ENCODE measurements at regions of chr19 and their contacts with region 1.

Region 1: DNA sequence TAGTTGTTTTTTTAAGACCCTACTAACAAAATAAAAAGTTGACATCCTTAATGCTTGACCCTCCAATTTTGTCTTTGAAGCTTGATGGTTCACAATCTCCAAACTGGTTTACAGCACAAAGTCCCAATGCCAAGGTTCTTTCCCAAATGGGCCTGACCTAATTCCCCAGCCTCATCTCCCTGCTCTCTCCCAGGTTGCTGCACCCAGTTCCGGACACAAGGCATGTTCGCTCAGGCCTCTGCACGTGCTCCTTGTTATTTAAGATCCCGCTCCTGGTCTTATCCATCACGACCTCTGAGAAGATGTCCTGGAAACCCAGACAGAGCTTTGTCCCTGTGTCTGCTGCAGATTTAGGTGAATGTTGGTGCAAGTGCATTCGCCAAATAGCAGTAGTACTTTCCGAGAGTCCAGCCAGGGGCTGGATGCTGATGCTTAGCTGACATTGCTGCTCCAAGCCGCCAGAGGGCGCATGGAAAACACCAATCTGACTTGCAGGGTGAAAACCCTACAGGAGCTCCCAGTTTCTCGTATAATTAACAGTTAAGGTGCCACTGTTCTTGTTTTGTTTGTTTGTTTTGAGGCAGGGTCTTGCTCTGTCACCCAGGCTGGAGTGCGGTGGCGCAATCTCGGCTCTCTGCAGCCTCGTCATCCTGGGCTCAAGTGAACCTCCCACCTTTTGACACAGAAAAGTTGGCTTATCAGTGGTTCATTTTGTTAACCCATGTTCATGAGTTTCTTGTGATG is 18.5 kb downstream of the LYPD3 start:
- DNase-seq: peak; percentile 85
- ATAC-seq: peak; percentile 88
- H3K4me3 Mint-ChIP-seq: no peak overlapping the region
- H3K27ac Mint-ChIP-seq: peak overlapping the region; percentile 18
- H3K4me1 Mint-ChIP-seq: peaks cover 25% of the 10 kb centered on the region
- H3K27me3 Mint-ChIP-seq: no peaks in the 10 kb centered on the region

Region 2: GRCh38 chr19:43337737-43338136 is 109.2 kb before region 1 on chr19:
- CTCF ChIA-PET with region 1: no interaction called
- POLR2A ChIA-PET with region 1: no interaction called
- DNase-seq: no peak
- ATAC-seq: no peak
- H3K4me3 Mint-ChIP-seq: no peak overlapping the region
- H3K27ac Mint-ChIP-seq: no peak overlapping the region
- H3K4me1 Mint-ChIP-seq: no peaks in the 10 kb centered on the region
- H3K27me3 Mint-ChIP-seq: peaks cover 2% of the 10 kb centered on the region

Region 3: DNA sequence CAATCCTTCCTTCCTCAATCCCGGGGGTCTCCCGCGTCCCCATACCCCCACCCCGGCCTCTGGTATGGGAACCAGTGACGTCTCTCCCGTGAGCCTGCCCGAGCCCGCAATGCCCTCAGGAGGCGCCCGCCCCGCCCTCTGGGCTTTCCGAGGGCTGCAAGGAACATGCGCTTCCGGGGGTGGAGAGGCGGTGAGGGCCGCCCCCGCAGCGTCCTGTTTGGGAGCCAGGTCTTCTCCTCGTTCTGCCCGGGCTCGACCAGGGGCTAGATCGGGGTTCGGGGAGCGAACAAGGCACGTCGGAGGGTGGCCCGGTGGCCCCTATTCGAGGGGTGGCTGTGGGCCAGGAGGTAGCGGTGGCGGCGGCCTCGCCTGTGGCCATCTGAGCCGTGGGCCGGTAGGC is 38.9 kb before region 1 on chr19:
- CTCF ChIA-PET with region 1: no interaction called
- POLR2A ChIA-PET with region 1: no interaction called
- DNase-seq: no peak
- ATAC-seq: no peak
- H3K4me3 Mint-ChIP-seq: no peak overlapping the region
- H3K27ac Mint-ChIP-seq: no peak overlapping the region
- H3K4me1 Mint-ChIP-seq: no peaks in the 10 kb centered on the region
- H3K27me3 Mint-ChIP-seq: no peaks in the 10 kb centered on the region

Region 4: DNA sequence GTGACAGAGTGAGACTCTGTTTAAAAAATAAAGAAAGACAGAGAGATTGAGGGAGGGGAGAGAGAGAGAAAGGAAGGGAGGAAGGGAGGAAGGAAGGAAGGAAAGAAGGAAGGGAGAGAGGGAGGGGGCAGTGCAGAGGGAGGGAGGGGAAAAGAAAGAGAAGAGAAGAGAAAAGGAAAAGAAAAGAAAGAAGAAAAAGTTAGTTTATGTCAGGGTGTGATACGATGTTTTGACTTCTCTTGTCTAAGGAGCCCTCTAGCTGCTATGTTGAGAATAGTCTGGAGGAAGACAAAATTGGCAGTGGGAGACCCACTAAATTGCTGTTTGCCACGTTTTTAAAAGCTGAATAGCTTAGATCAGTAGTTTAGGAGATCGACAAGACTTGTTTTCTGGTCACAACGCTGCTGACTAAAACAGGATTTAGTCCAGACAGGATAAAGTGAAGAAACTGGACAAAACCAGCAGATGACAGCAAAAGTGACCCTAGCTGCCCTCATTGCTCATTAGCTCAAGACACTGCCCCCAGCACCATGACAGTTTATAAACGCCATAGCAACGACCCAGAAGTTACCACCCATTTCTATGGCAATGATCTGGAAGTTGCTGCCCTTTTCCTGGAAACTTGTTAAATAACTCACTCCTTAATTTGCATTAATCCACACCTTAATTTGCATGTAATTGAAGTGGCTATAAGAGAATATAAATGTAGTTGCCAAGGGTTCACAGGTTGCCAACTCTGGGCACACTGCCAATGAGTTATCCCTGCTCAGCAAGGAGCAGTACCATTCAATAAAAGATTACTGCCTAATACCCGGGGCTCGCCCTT is 21.1 kb before region 1 on chr19:
- CTCF ChIA-PET with region 1: interaction called, 45 read pairs
- POLR2A ChIA-PET with region 1: no interaction called
- DNase-seq: no peak
- ATAC-seq: no peak
- H3K4me3 Mint-ChIP-seq: no peak overlapping the region
- H3K27ac Mint-ChIP-seq: no peak overlapping the region
- H3K4me1 Mint-ChIP-seq: peaks cover 4% of the 10 kb centered on the region
- H3K27me3 Mint-ChIP-seq: peaks cover 2% of the 10 kb centered on the region

Region 5: DNA sequence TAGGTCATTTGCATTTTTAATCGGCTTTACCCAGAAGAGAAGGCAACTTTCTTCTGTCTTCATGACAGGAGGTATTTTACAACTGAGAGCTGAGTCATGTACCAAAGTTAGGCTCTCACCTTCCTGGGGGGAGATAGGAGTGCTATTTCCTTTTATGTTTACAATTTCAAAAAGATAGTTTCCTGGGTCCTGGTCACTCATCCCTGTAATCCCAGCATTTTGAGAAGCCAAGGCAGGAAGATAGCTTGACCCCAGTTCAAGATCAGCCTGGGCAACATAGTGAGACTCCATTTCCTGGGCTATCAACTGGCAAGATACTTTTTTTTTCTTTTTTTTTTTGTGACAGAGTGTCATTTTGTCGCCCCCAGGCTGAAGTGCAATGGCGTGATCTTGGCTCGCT is 10.9 kb after region 1 on chr19:
- CTCF ChIA-PET with region 1: interaction called, 68 read pairs
- POLR2A ChIA-PET with region 1: no interaction called
- DNase-seq: no peak
- ATAC-seq: no peak
- H3K4me3 Mint-ChIP-seq: no peak overlapping the region
- H3K27ac Mint-ChIP-seq: no peak overlapping the region
- H3K4me1 Mint-ChIP-seq: peaks cover 11% of the 10 kb centered on the region
- H3K27me3 Mint-ChIP-seq: no peaks in the 10 kb centered on the region

Region 6: GRCh38 chr19:43463381-43464136 is 16.6 kb after region 1 on chr19:
- CTCF ChIA-PET with region 1: interaction called, 68 read pairs
- POLR2A ChIA-PET with region 1: interaction called, 3 read pairs
- DNase-seq: peak; percentile 99
- ATAC-seq: peak; percentile 88
- H3K4me3 Mint-ChIP-seq: peak overlapping the region; percentile 85
- H3K27ac Mint-ChIP-seq: peak overlapping the region; percentile 96
- H3K4me1 Mint-ChIP-seq: peaks cover 44% of the 10 kb centered on the region
- H3K27me3 Mint-ChIP-seq: no peaks in the 10 kb centered on the region

Region 7: GRCh38 chr19:43498233-43498842 is 51.4 kb after region 1 on chr19:
- CTCF ChIA-PET with region 1: interaction called, 33 read pairs
- POLR2A ChIA-PET with region 1: no interaction called
- DNase-seq: no peak
- ATAC-seq: no peak
- H3K4me3 Mint-ChIP-seq: no peak overlapping the region
- H3K27ac Mint-ChIP-seq: no peak overlapping the region
- H3K4me1 Mint-ChIP-seq: peaks cover 6% of the 10 kb centered on the region
- H3K27me3 Mint-ChIP-seq: no peaks in the 10 kb centered on the region

Region 8: GRCh38 chr19:43503501-43504425 is 56.8 kb after region 1 on chr19:
- CTCF ChIA-PET with region 1: interaction called, 33 read pairs
- POLR2A ChIA-PET with region 1: interaction called, 4 read pairs
- DNase-seq: peak; percentile 98
- ATAC-seq: peak; percentile 95
- H3K4me3 Mint-ChIP-seq: peak overlapping the region; percentile 88
- H3K27ac Mint-ChIP-seq: peak overlapping the region; percentile 97
- H3K4me1 Mint-ChIP-seq: peaks cover 27% of the 10 kb centered on the region
- H3K27me3 Mint-ChIP-seq: no peaks in the 10 kb centered on the region

Region 9: DNA sequence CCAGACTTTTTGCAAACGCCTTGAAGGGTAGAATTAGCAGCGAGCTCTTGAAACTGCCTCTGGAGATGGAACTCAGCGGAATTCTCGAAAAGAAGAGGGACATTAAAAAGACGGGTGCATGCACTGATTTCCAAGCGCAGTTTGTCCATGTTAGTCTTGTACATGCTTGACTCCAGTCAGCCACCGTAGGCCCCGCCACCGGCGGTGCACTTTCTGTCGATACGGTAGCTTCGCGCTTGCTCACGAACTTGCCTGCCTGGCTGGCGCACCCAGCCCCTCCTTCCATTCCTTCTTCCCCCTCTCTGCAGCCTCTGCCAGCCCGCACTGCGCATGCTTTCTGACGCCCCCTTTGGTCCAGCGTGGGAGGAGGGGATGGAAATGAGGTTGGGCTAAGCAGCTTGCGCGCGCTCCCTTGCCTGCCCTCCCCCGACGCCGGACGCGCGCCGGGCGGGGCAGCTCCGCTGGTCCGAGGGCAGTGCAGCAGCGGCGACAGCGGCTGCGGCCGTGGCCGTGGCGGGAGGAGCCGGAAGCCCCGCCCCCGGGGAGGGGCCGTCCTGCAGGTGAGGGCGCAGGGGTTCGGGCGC is 86.1 kb after region 1 on chr19 and contains the start of gene ZNF575:
- CTCF ChIA-PET with region 1: interaction called, 387 read pairs
- POLR2A ChIA-PET with region 1: no interaction called
- DNase-seq: peak; percentile 91
- ATAC-seq: peak; percentile 66
- H3K4me3 Mint-ChIP-seq: peak within 1 kb of the TSS; percentile 87
- H3K27ac Mint-ChIP-seq: peak within 1 kb of the TSS; percentile 98
- H3K4me1 Mint-ChIP-seq: peaks cover 27% of the 10 kb centered on the region
- H3K27me3 Mint-ChIP-seq: no peaks in the 10 kb centered on the region
- total RNA-seq, gene ZNF575: 3.4 to 3.7 TPM